GM10248 (cell line): ENCODE measurements at regions of chr5 and their contacts with region 1.

Region 1: GRCh38 chr5:151740336-151740942 is 18.0 kb downstream of the ATOX1 start:
- DNase-seq: peak; percentile 76
- CTCF ChIP-seq: peak; percentile 79

Region 2: DNA sequence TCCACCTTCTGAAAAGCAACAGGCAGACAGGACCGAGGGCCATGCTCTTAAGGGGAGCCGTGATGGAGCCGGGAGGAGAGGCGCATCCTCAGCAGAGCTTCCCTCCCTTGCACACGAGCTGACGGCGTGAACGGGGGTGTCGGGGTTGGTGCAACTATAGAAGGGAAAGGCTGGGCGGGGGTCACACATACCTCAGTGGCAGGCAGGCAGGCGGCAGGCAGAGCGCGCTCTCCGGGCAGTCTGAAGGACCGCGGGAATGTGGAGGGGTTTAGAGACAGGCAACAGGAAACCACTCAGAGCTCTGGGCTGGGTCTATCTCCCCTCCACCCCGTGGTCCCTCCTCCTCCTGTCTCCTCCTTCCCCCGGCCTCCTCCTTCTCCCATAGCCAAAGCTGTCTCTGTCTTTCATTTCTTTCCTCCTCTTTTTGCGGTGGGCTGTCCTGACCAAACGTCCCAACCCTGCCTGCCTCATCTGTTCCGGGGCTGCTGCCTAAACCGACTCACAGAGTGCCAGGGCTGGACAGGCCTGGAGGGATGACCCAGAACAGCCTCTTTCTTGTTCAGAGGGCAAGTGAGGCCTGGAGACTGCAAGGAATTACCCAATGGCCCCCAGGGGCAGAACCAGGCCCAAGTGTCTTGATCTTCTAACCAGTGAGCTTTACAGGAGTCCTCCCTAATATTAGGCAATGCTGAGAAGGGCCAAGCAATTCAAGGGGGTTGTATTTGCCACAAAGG is 53.6 kb before region 1 on chr5 and contains the start of gene SPARC:
- CTCF ChIA-PET with region 1: interaction called, 30 read pairs
- POLR2A ChIA-PET with region 1: interaction called, 3 read pairs
- DNase-seq: peak; percentile 45
- CTCF ChIP-seq: no peak

Region 3: DNA sequence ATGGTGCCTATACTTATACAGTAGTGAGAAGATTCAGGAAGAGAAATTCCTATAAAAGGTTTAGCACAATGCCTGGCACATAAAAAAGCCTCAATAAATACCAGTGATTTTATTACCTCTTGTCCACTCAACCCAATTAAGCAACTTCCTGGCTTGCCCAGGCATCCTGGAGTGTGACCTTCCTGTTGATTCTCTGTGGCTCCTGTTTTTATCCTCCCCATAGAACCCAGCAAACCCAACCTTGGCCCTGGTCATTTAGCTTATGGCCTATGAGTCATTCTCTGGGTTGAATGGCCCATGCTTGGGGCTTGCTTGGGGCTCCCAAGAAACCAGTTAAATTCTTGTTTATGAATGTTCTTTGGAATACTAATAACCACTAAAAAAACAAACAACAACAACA is 32.3 kb before region 1 on chr5:
- CTCF ChIA-PET with region 1: interaction called, 15 read pairs
- POLR2A ChIA-PET with region 1: no interaction called
- DNase-seq: no peak
- CTCF ChIP-seq: no peak

Region 4: DNA sequence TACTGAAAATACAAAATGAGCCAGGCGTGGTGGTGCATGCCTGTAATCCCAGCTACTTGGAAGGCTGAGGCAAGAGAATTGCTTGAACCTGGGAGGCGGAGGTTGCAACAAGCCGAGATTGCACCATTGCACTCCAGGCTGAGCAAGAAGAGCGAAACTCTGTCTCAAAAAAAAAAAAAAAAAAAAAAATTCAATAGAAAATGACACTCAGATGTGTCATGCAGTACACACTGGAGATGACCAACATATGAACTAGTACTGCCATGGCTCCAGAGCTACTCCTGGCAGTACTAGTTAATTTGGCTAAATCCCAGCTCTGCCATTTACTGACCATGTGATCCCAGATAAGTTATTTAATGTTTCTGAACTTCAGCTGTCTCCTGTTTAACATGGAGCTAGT is 10.7 kb after region 1 on chr5:
- CTCF ChIA-PET with region 1: interaction called, 86 read pairs
- POLR2A ChIA-PET with region 1: no interaction called
- DNase-seq: no peak
- CTCF ChIP-seq: no peak

Region 5: GRCh38 chr5:151764801-151765200 is 24.4 kb after region 1 on chr5:
- CTCF ChIA-PET with region 1: interaction called, 28 read pairs
- POLR2A ChIA-PET with region 1: no interaction called
- DNase-seq: no peak
- CTCF ChIP-seq: no peak